ENCODE measurements at regions of chr17 and their contacts with region 1.

Region 1: DNA sequence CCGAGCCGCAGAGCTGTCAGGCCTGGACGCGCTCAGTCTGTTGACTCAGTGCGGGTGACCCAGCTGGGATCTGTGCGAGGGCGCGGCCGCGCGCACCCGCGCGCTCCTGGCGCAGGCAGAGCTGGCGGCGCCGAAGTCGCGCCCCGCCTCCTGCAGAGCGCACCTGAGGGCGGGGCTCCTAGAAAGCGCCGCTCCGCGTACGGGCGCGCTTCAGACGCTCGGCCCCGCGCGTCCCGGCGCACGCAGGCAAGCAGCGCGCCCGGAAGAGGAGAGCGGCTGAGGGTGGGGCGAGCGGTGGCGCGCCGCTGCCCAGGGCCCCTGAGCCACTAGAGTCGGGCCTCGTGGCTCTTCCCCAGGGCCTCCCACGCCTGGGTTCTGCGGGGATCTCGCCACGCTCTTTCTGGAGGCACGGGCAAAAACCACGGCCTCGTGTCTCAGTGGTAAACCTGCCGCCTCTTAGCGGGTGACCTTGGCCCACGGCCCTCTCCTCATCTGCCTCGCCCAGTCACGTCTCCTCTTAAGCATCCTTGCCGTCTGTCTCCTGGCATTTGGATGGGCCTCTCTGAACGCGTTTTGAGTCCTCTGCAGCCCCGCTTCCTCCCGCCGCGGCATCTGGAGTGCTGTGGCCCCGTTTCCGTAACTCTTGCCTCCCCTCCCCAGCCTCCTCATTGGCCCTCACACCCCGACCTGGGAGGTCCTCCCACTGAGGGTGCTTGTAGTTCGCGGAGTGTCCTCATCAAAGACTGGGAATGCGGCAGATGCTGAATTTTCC is at the start of gene ABCA5:
- DNase-seq: peak; percentile 91
- H3K4me3 ChIP-seq: peak within 1 kb of the TSS; percentile 70 to 89 (median 70)
- H3K27ac ChIP-seq: peak within 1 kb of the TSS; percentile 19
- H3K4me1 ChIP-seq: peaks cover 8% of the 10 kb centered on the region
- H3K27me3 ChIP-seq: no peaks in the 10 kb centered on the region
- CTCF ChIP-seq: no peak
- POLR2A ChIP-seq: peak; percentile 87
- total RNA-seq, gene ABCA5: 23.2 and 25.4 TPM in 2 replicates

Region 2: GRCh38 chr17:68777243-68777855 is 549.9 kb before region 1 on chr17:
- CTCF ChIA-PET with region 1: interaction called, 4 read pairs
- POLR2A ChIA-PET with region 1: no interaction called
- dilution Hi-C with region 1: no loop called
- intact Hi-C with region 1: loop called (anchors 5 kb)
- DNase-seq: peak; percentile 90
- H3K4me3 ChIP-seq: no peak overlapping the region
- H3K27ac ChIP-seq: peak overlapping the region; percentile 44
- H3K4me1 ChIP-seq: peaks cover 36% of the 10 kb centered on the region
- H3K27me3 ChIP-seq: no peaks in the 10 kb centered on the region
- CTCF ChIP-seq: peak; percentile 63
- POLR2A ChIP-seq: no peak

Region 3: DNA sequence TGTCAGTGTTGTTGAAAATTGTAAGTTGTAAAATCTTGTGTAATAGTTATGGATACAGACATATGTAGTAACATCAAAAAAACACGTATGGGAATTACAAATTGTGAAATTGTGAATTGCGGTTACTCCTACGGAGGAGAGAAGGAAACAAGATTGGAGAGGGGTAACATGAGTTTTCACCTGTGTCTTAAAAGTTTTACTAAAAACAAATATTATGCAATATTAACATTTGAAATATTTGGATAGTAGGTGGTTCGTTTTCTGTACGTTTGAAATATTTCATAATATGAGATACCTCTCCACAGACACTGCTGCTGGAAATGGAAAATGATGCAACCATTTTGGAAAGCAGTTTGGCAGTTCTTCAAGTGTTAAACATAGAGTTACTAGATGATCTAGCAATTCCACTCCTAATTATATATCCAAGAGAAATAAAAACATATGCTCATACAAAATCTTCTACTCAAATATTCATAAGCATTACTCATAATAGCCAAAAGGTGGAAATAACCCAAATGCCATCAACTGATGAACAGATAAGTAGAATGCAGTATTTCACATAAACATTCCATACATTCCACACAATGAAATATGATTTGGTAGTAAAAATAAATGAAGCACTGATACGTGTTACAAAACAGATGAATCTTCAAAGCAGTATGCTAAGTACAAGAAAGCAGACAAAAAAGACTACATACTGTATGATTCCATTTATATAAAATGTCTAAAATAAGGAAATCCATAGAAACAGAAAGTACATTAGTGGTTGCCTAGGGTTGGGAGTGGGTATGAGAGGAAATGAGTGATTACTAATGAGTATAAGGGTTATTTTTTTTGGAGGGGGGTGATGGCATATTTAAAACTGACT is 57.9 kb before region 1 on chr17:
- CTCF ChIA-PET with region 1: no interaction called
- POLR2A ChIA-PET with region 1: no interaction called
- dilution Hi-C with region 1: no loop called
- intact Hi-C with region 1: loop called (anchors 2 kb)
- DNase-seq: peak; percentile 85
- H3K4me3 ChIP-seq: peak overlapping the region in 1 of 3 experiments; percentile 50
- H3K27ac ChIP-seq: peak overlapping the region; percentile 86
- H3K4me1 ChIP-seq: peaks cover 29% of the 10 kb centered on the region
- H3K27me3 ChIP-seq: no peaks in the 10 kb centered on the region
- CTCF ChIP-seq: no peak
- POLR2A ChIP-seq: no peak

Region 4: GRCh38 chr17:69358688-69359596 is 31.7 kb after region 1 on chr17:
- CTCF ChIA-PET with region 1: no interaction called
- POLR2A ChIA-PET with region 1: no interaction called
- dilution Hi-C with region 1: no loop called
- intact Hi-C with region 1: no loop called
- DNase-seq: peak; percentile 3
- H3K4me3 ChIP-seq: no peak overlapping the region
- H3K27ac ChIP-seq: no peak overlapping the region
- H3K4me1 ChIP-seq: no peaks in the 10 kb centered on the region
- H3K27me3 ChIP-seq: no peaks in the 10 kb centered on the region
- CTCF ChIP-seq: peak in 1 of 2 donors; percentile 8
- POLR2A ChIP-seq: no peak

Region 5: GRCh38 chr17:69388822-69389442 is 61.7 kb after region 1 on chr17:
- CTCF ChIA-PET with region 1: no interaction called
- POLR2A ChIA-PET with region 1: no interaction called
- dilution Hi-C with region 1: no loop called
- intact Hi-C with region 1: loop called (anchors 1 kb)
- DNase-seq: no peak
- H3K4me3 ChIP-seq: no peak overlapping the region
- H3K27ac ChIP-seq: no peak overlapping the region
- H3K4me1 ChIP-seq: no peaks in the 10 kb centered on the region
- H3K27me3 ChIP-seq: no peaks in the 10 kb centered on the region
- CTCF ChIP-seq: no peak
- POLR2A ChIP-seq: no peak

Region 6: GRCh38 chr17:69501591-69502468 is 174.6 kb after region 1 on chr17:
- CTCF ChIA-PET with region 1: no interaction called
- POLR2A ChIA-PET with region 1: no interaction called
- dilution Hi-C with region 1: no loop called
- intact Hi-C with region 1: loop called (anchors 5 kb)
- DNase-seq: peak; percentile 59
- H3K4me3 ChIP-seq: peak overlapping the region in 1 of 3 experiments; percentile 46
- H3K27ac ChIP-seq: peak overlapping the region; percentile 21
- H3K4me1 ChIP-seq: peaks cover 12% of the 10 kb centered on the region
- H3K27me3 ChIP-seq: no peaks in the 10 kb centered on the region
- CTCF ChIP-seq: no peak
- POLR2A ChIP-seq: no peak